Right ventricle myocardium superior (tissue), 1 donor: ENCODE measurements at regions of chr1 and their contacts with region 1.

Region 1: DNA sequence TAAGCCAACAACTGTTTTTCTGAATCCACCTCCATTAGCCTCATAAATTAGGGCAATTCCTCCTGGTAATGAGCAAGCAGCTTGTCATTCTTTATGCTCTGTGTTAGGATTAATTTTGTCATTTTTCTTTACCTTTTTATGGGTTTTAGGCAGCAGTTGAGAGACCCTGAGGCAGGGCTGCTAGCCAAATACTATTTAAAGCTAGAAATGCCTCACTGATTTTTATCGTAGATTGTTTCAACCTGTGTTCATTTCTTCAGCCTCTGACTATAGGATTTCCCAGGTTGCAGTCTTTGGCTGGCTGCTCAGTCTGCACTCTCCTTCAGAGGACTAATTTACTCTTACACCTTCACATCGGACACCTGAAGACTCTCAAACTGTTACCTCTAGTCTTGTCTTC is 61.9 kb upstream of the RABGAP1L start:
- DNase-seq: no peak
- ATAC-seq: no peak

Region 2: DNA sequence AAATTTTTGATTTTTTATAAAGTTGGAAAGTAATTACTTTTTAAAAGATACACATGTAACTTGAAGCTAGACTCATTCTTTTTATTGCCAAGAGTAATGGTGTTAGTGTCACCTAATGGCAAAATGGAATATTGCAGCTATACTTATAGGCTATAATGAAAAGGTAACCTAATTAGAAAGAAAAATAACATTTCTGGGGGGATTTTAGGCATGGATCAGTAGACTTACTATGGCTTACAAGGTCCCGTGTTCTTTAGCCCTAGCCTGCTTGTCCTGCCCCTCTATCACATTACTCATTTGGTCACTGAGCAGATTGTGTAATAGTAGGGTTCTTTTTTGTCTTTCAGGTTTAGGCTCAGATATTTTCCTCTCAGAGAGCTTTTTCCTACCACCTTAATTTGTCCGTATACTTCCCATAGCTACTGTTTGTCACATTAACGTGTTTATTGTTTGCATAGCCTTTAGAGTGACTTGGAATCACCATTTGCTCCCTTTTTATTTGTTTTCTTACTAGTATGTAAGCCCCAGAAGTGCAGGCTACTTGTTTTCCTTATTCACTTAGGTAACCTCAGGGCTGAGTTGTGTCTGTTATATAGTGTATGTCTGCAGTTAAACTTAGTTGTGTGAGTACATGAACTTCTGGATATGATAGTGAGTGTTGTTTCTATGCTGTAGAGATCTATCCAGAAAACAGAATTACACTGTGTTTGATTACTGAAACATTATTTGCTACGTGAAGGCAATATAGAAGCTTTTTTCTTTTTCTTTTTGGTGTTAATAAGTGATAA is 120.6 kb after region 1 on chr1:
- intact Hi-C with region 1: loop called (anchors 10 kb)
- DNase-seq: no peak
- ATAC-seq: peak; percentile 79